ENCODE measurements at regions of chr20 and their contacts with region 1.

Region 1: DNA sequence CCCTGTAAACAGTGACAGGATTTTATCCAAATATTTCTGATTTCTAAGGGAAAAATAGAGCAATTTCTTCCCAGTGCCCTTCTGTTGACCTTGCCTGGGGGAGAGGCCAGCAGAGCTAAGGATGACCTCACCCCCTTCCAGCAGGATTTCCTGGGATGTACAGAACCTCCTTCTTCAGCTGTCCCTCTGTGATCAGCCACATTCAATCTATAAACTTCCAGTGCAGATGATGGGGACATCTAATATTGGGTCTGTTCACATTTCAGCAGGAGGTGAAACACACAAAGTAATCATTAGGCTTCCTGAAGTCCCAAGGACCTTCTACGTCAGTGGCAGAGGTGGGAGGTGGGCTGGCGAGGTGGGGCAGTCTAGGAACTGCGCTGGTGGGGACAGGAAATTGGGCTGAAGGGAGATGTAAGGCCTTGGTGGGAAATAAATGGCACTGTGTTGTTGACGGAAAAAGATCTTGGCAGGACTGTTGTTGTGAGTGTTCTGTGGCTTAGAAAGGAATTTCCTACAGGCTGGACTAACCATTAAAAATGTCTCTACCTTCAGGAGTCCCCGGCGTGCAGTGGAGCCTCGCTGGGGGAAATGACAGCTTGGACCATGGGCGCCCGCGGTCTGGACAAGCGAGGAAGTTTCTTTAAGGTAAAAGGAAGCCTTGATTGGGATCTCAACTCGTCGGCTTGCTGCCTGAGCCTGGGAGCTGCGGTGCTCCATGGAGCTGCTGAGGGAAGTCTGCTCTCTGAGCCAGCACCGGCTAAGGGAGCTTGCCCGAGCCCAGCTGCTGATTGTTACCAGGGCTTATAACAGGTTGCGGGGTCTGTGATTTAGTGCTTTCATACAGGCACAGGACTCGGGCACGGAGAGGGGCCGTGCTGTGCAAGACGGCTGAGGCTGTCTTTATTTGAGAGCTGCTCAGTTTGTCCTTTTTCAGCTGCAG is 127.9 kb upstream of the NAA20 start:
- DNase-seq: peak in 1 of 2 donors; percentile 71
- H3K4me3 ChIP-seq: peak overlapping the region; percentile 54 to 55
- H3K27ac ChIP-seq: peak overlapping the region; percentile 87 to 90
- H3K4me1 ChIP-seq: peaks cover 2 to 43% of the 10 kb centered on the region in 2 donors
- H3K27me3 ChIP-seq: no peaks in the 10 kb centered on the region
- CTCF ChIP-seq: no peak

Region 2: GRCh38 chr20:19757487-19758132 is 131.7 kb before region 1 on chr20:
- intact Hi-C with region 1: loop called (anchors 5 kb)
- DNase-seq: peak; percentile 69 to 93
- H3K4me3 ChIP-seq: peak overlapping the region; percentile 92 to 97
- H3K27ac ChIP-seq: peak overlapping the region; percentile 97
- H3K4me1 ChIP-seq: peaks cover 5 to 17% of the 10 kb centered on the region in 2 donors
- H3K27me3 ChIP-seq: no peaks in the 10 kb centered on the region
- CTCF ChIP-seq: no peak

Region 3: DNA sequence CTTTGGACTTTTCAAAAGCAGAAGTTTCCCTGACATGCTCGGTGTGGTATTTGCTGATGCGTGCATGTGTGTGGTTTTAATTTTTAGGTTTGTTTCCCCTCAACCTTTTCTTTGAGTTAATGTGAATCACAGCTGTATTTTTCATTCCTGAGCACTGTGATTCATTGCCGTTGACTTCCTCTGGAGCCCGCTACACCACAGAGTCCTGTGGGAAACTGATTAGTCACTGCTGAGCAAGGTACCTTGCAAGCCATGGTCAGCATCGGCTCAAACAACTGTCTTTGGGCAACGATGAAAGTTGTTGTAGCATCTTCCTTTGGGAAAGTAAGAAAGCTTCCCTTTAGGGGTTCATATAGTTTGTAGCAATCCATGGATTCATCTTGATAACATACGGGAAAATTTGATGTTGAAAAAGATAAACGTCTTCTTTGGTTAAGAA is 73.7 kb before region 1 on chr20:
- intact Hi-C with region 1: loop called (anchors 2 kb)
- DNase-seq: peak; percentile 31 to 81
- H3K4me3 ChIP-seq: no peak overlapping the region
- H3K27ac ChIP-seq: peak overlapping the region; percentile 24 to 73
- H3K4me1 ChIP-seq: peaks cover 16 to 37% of the 10 kb centered on the region in 2 donors
- H3K27me3 ChIP-seq: no peaks in the 10 kb centered on the region
- CTCF ChIP-seq: peak in 1 of 3 experiments; percentile 46

Region 4: GRCh38 chr20:19850198-19850533 is 39.1 kb before region 1 on chr20:
- intact Hi-C with region 1: no loop called
- DNase-seq: no peak
- H3K4me3 ChIP-seq: peak overlapping the region in 1 of 2 donors; percentile 28
- H3K27ac ChIP-seq: peak overlapping the region; percentile 68 to 81
- H3K4me1 ChIP-seq: peaks cover 0 to 14% of the 10 kb centered on the region in 2 donors
- H3K27me3 ChIP-seq: no peaks in the 10 kb centered on the region
- CTCF ChIP-seq: no peak

Region 5: GRCh38 chr20:19974626-19975435 is 85.5 kb after region 1 on chr20:
- intact Hi-C with region 1: loop called (anchors 5 kb)
- DNase-seq: peak; percentile 78 to 96
- H3K4me3 ChIP-seq: peak overlapping the region; percentile 60 to 69
- H3K27ac ChIP-seq: peak overlapping the region; percentile 90
- H3K4me1 ChIP-seq: peaks cover 23 to 46% of the 10 kb centered on the region in 2 donors
- H3K27me3 ChIP-seq: no peaks in the 10 kb centered on the region
- CTCF ChIP-seq: no peak

Measured in ascending aorta (tissue), 2 donors.